Sigmoid colon (tissue), 7 donors: ENCODE measurements at regions of chr1 and their contacts with region 1.

Region 1: DNA sequence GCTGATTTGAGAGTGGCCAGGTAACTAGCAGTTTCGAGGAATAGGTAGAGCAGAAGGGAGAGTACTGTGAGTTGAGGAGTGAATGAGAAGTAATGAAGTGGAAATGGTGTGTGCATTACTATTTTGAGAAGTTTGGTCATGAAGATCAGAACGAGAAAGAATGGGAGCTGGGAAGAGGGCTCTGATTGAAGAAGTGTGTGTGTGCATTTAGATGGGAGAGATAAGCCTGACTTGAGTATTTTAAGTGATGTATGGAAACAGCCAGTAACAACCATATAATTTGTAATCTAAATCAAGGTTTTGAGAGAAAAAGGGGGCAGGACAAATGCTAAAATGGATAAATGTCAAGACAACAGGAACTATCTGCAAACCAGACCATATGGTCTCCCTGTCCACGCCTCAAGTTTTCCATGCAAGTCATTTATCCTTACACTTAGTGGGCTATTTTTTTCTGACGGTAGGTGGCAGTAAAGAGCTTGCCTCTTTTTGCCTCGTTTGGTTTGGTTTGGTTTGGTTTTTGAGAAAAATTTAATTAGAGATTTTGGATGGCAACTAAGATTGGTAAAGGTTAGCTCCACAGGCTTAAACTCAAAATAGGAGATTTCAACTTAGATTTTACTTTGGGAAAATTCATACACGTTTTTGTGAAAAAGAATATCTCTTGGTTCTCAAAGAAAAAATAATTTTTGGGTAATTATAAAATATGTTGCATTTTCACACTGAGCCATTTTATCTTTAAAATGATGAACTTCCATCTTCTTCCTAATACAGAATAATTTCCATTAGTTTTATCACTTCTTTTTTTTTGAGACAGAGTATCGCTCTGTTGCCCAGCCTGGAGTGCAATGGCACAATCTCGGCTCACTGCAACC is 9.5 kb upstream of the B3GALNT2 start:
- DNase-seq: no peak
- H3K4me3 ChIP-seq: no peak overlapping the region
- H3K27ac ChIP-seq: no peak overlapping the region
- H3K4me1 ChIP-seq: no peaks in the 10 kb centered on the region
- H3K27me3 ChIP-seq: no peaks in the 10 kb centered on the region
- CTCF ChIP-seq: peak; percentile 48 to 94 (median 78)
- EP300 ChIP-seq: no peak
- POLR2A ChIP-seq: no peak

Region 2: GRCh38 chr1:235455823-235456222 is 57.9 kb before region 1 on chr1:
- intact Hi-C with region 1: no loop called
- DNase-seq: no peak
- H3K4me3 ChIP-seq: no peak overlapping the region
- H3K27ac ChIP-seq: no peak overlapping the region
- H3K4me1 ChIP-seq: no peaks in the 10 kb centered on the region
- H3K27me3 ChIP-seq: no peaks in the 10 kb centered on the region
- CTCF ChIP-seq: no peak
- EP300 ChIP-seq: no peak
- POLR2A ChIP-seq: no peak

Region 3: DNA sequence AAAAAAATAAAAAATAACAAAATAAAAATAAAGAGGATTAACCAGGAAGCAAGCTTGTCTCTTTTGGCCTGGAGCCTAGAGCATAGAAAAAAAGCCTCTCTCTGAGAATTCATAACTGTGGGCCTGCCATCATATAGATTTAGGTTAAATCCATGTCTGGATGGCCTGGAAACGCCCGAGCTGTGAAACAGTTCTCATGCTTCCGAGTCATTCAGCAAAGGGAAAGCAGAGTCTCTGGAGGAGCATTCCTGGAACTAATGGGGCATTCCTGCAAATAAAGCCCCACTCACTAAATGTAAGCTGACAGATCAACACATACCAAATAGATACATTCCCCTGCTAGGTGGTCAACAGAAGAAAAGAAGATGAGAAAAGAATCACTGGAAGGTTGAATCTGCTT is 211.7 kb after region 1 on chr1:
- intact Hi-C with region 1: loop called (anchors 10 kb)
- DNase-seq: no peak
- H3K4me3 ChIP-seq: no peak overlapping the region
- H3K27ac ChIP-seq: no peak overlapping the region
- H3K4me1 ChIP-seq: no peaks in the 10 kb centered on the region
- H3K27me3 ChIP-seq: no peaks in the 10 kb centered on the region
- CTCF ChIP-seq: no peak
- EP300 ChIP-seq: no peak
- POLR2A ChIP-seq: no peak

Region 4: GRCh38 chr1:235783148-235783776 is 269.5 kb after region 1 on chr1:
- intact Hi-C with region 1: loop called (anchors 5 kb)
- DNase-seq: no peak
- H3K4me3 ChIP-seq: no peak overlapping the region
- H3K27ac ChIP-seq: no peak overlapping the region
- H3K4me1 ChIP-seq: no peaks in the 10 kb centered on the region
- H3K27me3 ChIP-seq: no peaks in the 10 kb centered on the region
- CTCF ChIP-seq: peak in 1 of 4 experiments; percentile 33
- EP300 ChIP-seq: no peak
- POLR2A ChIP-seq: no peak

Region 5: DNA sequence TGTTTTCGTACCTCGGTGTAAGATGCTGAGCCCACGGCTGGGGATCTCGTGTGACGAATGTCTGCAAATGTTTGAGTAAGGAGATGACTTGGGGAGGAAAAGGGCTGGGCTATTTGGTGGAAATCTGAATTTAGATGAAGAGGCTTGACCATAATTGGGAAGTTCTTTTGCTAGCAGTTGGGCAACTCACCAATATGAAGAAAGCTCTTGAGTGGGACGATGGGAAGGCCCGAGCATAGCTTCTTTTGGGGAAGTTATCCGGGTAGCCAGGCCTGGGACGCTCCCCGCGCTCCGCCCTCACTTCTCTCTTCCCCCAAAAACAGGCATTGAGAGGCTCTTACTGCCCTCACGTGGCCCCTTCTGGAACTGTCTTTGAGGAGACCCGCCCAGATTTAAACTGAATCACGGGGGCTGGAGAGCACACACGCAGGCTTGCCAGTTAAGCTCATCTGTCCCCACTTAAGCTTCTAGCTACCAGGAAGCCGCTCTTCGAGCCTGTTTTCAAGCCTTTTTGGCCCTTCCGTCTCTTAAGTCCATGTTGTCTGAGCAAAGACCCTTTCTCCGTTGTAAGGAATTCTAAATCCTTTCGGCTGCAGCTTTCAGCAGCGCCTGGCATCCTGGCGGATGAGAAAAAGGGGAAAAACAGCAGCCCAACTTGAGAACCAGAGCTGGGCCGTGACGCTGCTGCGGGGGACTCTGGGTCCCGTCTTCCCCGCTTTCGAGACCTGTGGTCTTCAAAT is 458.0 kb after region 1 on chr1:
- intact Hi-C with region 1: loop called (anchors 5 kb)
- DNase-seq: peak; percentile 98
- H3K4me3 ChIP-seq: peak overlapping the region; percentile 10 to 52 (median 44)
- H3K27ac ChIP-seq: peak overlapping the region; percentile 88 to 98 (median 91)
- H3K4me1 ChIP-seq: peaks cover 0 to 22% (median 15%) of the 10 kb centered on the region in 4 donors
- H3K27me3 ChIP-seq: no peaks in the 10 kb centered on the region
- CTCF ChIP-seq: peak; percentile 76 to 82 (median 78)
- EP300 ChIP-seq: peak in 1 of 4 donors; percentile 3
- POLR2A ChIP-seq: peak; percentile 37 to 50